ENCODE measurements at regions of chr20 and their contacts with region 1.

Region 1: GRCh38 chr20:50859161-50859560 is 64.3 kb downstream of the BCAS4 start:
- DNase-seq: no peak
- H3K4me3 ChIP-seq: no peak overlapping the region
- H3K27ac ChIP-seq: no peak overlapping the region
- H3K4me1 ChIP-seq: no peaks in the 10 kb centered on the region
- H3K27me3 ChIP-seq: no peaks in the 10 kb centered on the region
- CTCF ChIP-seq: no peak

Region 2: GRCh38 chr20:49484180-49485140 is 1374.7 kb before region 1 on chr20:
- CTCF ChIA-PET with region 1: no interaction called
- POLR2A ChIA-PET with region 1: interaction called, 23 read pairs
- intact Hi-C with region 1: no loop called
- DNase-seq: peak; percentile 64 to 80
- H3K4me3 ChIP-seq: peak overlapping the region; percentile 59
- H3K27ac ChIP-seq: no peak overlapping the region
- H3K4me1 ChIP-seq: 0 out of 2 replicates have a peak, but pooled peaks cover 6% of the 10 kb centered on the region
- H3K27me3 ChIP-seq: peaks cover 41% of the 10 kb centered on the region
- CTCF ChIP-seq: peak; percentile 86

Region 3: DNA sequence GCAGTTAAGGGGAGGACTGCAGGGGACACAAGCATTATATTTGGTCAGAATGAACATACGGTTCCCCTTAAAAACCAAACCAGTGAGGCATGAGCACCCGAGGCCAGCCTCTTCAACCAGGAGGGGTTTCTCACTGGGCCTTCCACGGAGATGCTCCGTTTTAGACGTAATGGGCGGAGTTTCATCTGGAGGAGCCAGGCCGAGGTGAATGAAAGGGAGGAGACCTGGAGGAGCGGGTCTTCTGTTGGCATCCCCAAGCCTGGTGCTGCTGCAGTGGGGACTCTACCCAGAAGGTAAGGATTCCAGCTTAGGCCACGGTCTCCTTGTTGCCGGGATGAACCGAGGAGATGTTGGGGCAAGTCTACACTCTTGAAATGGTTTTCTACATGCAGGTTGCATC is 24.7 kb after region 1 on chr20:
- CTCF ChIA-PET with region 1: no interaction called
- POLR2A ChIA-PET with region 1: no interaction called
- intact Hi-C with region 1: no loop called
- DNase-seq: no peak
- H3K4me3 ChIP-seq: no peak overlapping the region
- H3K27ac ChIP-seq: no peak overlapping the region
- H3K4me1 ChIP-seq: no peaks in the 10 kb centered on the region
- H3K27me3 ChIP-seq: no peaks in the 10 kb centered on the region
- CTCF ChIP-seq: no peak

Region 4: GRCh38 chr20:50913690-50914375 is 54.7 kb after region 1 on chr20:
- CTCF ChIA-PET with region 1: no interaction called
- POLR2A ChIA-PET with region 1: no interaction called
- intact Hi-C with region 1: no loop called
- DNase-seq: no peak
- H3K4me3 ChIP-seq: no peak overlapping the region
- H3K27ac ChIP-seq: no peak overlapping the region
- H3K4me1 ChIP-seq: no peaks in the 10 kb centered on the region
- H3K27me3 ChIP-seq: no peaks in the 10 kb centered on the region
- CTCF ChIP-seq: no peak